ENCODE measurements at regions of chr6 and their contacts with region 1.

Region 1: DNA sequence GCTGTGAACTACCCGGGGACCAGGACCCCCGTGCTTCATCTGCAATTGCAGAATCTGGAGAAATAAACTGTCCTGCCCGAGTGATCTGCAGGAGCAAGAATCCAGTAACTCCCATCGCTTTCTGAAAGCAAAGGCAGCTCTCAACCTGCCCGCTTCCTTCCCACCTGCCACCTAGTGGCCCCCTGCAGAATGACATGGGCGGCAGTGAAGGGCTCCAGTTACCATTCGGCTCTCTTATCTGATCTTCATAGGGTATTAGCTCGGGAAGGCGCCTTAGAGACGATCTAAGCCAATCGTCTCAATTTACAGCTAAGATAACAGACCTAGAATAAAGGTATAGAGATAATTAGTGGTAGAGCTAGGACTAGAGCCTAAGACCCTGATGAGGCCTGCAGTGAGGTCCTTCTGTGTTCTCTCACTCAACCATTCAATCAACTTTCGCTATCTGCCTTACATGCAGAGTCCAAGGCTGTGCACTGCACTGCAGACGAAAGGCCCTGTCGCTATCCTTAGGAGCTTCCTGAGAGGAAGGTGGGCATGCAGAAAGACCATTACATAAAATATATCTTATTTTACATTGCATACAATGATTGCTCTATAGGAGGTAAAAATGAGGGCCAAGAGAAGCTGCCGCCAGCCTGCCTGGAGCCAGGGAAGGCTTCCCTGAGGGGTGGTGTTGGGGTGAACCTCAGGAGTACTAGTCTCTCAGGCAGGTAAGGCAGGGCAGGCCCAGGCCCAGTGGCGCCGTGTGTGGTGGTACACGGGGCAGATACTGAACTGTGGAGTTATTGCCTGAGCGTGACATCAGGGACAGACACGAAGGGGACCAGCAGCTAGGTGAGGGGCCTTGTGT is 7.1 kb upstream of the PSMG4 start:
- H3K4me3 ChIP-seq: no peak overlapping the region
- H3K27ac ChIP-seq: no peak overlapping the region
- H3K4me1 ChIP-seq: peaks cover 6% of the 10 kb centered on the region; the same call in 1 of the 2 replicates
- CTCF ChIP-seq: peak; percentile 83

Region 2: GRCh38 chr6:2853761-2854395 is 397.8 kb before region 1 on chr6:
- CTCF ChIA-PET with region 1: interaction called, 3 read pairs
- POLR2A ChIA-PET with region 1: interaction called, 10 read pairs
- H3K4me3 ChIP-seq: peak overlapping the region; percentile 25
- H3K27ac ChIP-seq: no peak overlapping the region
- H3K4me1 ChIP-seq: peaks cover 4% of the 10 kb centered on the region
- CTCF ChIP-seq: peak; percentile 28; the same call in 1 of the 2 replicates

Region 3: GRCh38 chr6:3157131-3157927 is 94.4 kb before region 1 on chr6 and contains the start of gene TUBB2A:
- CTCF ChIA-PET with region 1: interaction called, 13 read pairs
- POLR2A ChIA-PET with region 1: interaction called, 20 read pairs
- H3K4me3 ChIP-seq: peak within 1 kb of the TSS; percentile 71
- H3K27ac ChIP-seq: peak within 1 kb of the TSS; percentile 71; the same call in 1 of the 2 replicates
- H3K4me1 ChIP-seq: peaks cover 9% of the 10 kb centered on the region
- CTCF ChIP-seq: no peak; the same call in 1 of the 2 replicates

Region 4: GRCh38 chr6:3209114-3210023 is 42.3 kb before region 1 on chr6:
- CTCF ChIA-PET with region 1: interaction called, 10 read pairs
- POLR2A ChIA-PET with region 1: interaction called, 11 read pairs
- H3K4me3 ChIP-seq: no peak overlapping the region
- H3K27ac ChIP-seq: no peak overlapping the region; the same call in 1 of the 2 replicates
- H3K4me1 ChIP-seq: 0 out of 2 replicates have a peak, but pooled peaks cover 3% of the 10 kb centered on the region
- CTCF ChIP-seq: peak; percentile 16; the same call in 1 of the 2 replicates

Region 5: DNA sequence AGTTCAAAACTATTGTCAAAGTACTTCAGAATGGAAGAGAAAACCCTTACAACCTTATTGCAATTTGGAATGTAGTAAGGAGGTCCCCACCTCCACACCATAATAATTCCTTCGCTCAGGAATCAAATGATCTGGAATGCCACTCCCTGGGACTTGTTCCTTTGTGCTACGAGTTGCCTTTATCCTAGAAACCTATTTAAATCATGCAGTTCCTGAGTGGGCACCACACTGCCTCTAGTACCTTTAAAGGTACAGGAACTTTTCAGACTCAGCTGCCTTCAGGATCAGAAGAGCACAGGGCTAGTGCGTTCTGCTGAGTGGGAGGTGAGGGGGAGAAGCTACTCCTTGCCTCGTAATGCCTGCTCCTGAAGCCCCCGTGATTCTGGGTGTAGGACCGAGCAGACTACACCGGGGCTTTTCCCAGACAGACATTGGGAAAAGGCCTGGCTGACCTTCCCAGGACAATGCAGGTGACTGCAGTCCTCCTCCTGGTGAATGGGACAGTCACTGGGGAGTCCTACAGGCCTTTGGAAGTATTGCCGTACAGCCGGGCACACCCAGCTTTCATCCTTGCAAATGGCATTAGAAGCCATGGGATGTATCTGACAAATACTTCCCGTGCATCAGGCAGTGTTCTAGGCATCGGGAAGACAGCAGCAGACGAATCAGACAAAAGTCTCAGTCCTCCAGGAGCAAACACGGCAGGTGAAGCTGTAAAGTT is 12.4 kb before region 1 on chr6:
- CTCF ChIA-PET with region 1: interaction called, 72 read pairs
- POLR2A ChIA-PET with region 1: interaction called, 6 read pairs
- H3K4me3 ChIP-seq: no peak overlapping the region
- H3K27ac ChIP-seq: no peak overlapping the region
- H3K4me1 ChIP-seq: no peaks in the 10 kb centered on the region
- CTCF ChIP-seq: no peak

Measured in HEK293 (cell line).